Natural killer cell (primary cell): ENCODE measurements at regions of chr11 and their contacts with region 1.

Region 1: GRCh38 chr11:45110562-45110961 is 35.9 kb upstream of the PRDM11 start:
- DNase-seq: peak in 1 of 2 donors; percentile 84
- ATAC-seq: peak; percentile 70 to 75 (median 70)
- H3K4me3 ChIP-seq: no peak overlapping the region
- H3K4me3 Mint-ChIP-seq: no peak overlapping the region
- H3K27ac ChIP-seq: no peak overlapping the region
- H3K27ac Mint-ChIP-seq: no peak overlapping the region
- H3K4me1 ChIP-seq: no peaks in the 10 kb centered on the region
- H3K4me1 Mint-ChIP-seq: no peaks in the 10 kb centered on the region
- H3K27me3 ChIP-seq: peaks cover 9% of the 10 kb centered on the region
- H3K27me3 Mint-ChIP-seq: peaks cover 50 to 57% of the 10 kb centered on the region in 2 donors
- CTCF ChIP-seq: peak; percentile 74

Region 2: GRCh38 chr11:45289369-45289768 is 178.8 kb after region 1 on chr11:
- intact Hi-C with region 1: loop called (anchors 1 kb)
- DNase-seq: no peak
- ATAC-seq: no peak
- H3K4me3 ChIP-seq: no peak overlapping the region
- H3K4me3 Mint-ChIP-seq: no peak overlapping the region
- H3K27ac ChIP-seq: no peak overlapping the region
- H3K27ac Mint-ChIP-seq: no peak overlapping the region
- H3K4me1 ChIP-seq: no peaks in the 10 kb centered on the region
- H3K4me1 Mint-ChIP-seq: no peaks in the 10 kb centered on the region
- H3K27me3 ChIP-seq: peaks cover 24% of the 10 kb centered on the region
- H3K27me3 Mint-ChIP-seq: peaks cover 71 to 90% of the 10 kb centered on the region in 2 donors
- CTCF ChIP-seq: no peak

Region 3: GRCh38 chr11:45332276-45332934 is 221.8 kb after region 1 on chr11:
- intact Hi-C with region 1: loop called (anchors 1 kb)
- DNase-seq: peak in 1 of 2 donors; percentile 73
- ATAC-seq: peak in 2 of 3 donors; percentile 70 to 76
- H3K4me3 ChIP-seq: no peak overlapping the region
- H3K4me3 Mint-ChIP-seq: no peak overlapping the region
- H3K27ac ChIP-seq: no peak overlapping the region
- H3K27ac Mint-ChIP-seq: no peak overlapping the region
- H3K4me1 ChIP-seq: no peaks in the 10 kb centered on the region
- H3K4me1 Mint-ChIP-seq: no peaks in the 10 kb centered on the region
- H3K27me3 ChIP-seq: no peaks in the 10 kb centered on the region
- H3K27me3 Mint-ChIP-seq: peaks cover 17 to 27% of the 10 kb centered on the region in 2 donors
- CTCF ChIP-seq: peak; percentile 95